ENCODE measurements at regions of chr19 and their contacts with region 1.

Region 1: GRCh38 chr19:16899566-16900075 is 10.8 kb downstream of the F2RL3 start:
- DNase-seq: peak; percentile 45 to 48
- H3K4me3 ChIP-seq: no peak overlapping the region
- H3K27ac ChIP-seq: no peak overlapping the region
- H3K4me1 ChIP-seq: peaks cover 3% of the 10 kb centered on the region; the same call in 1 of the 2 replicates
- H3K27me3 ChIP-seq: no peaks in the 10 kb centered on the region
- CTCF ChIP-seq: peak; percentile 82

Region 2: DNA sequence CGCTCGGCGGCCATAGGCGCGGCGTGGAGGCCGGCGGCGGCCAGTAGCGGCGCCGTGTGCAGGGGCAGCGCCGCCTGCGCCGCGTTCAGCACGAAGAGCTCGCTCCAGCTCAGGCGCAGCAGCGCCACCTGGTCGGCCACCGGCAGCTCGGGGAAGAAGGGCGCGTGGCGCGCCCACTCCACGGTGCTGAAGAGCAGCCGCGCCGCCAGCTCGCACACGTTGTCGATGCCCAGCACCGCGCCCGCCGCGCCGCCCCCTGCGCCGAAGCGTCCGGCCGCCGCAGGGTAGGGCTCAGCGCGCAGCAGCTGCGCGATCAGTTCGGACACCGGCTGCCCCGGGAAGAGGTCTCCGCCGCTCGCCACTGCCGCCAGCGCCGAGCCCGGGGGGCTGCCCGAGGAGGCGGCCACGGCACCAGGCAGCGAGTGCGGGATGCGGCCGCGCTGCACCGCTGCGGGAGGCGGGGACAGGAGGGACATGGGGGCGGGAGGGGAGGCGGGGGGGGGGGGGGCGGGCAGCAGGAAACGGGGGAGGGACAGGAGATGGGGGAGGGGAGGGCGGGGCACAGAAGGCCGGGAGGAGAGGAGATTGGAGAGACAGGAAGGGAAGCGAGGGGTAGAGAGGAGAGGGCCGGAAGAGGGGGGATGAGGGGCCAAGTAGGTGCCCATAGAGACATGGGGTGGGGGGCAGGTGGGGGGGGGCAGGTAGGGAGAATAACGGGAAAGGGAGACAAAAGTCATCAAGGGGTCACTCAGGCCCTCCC is 336.2 kb after region 1 on chr19:
- CTCF ChIA-PET with region 1: no interaction called
- POLR2A ChIA-PET with region 1: interaction called, 22 read pairs
- intact Hi-C with region 1: no loop called
- DNase-seq: peak in 1 of 2 experiments; percentile 24
- H3K4me3 ChIP-seq: peak overlapping the region; percentile 40; the same call in 1 of the 2 replicates
- H3K27ac ChIP-seq: no peak overlapping the region
- H3K4me1 ChIP-seq: peaks cover 11% of the 10 kb centered on the region; the same call in 1 of the 2 replicates
- H3K27me3 ChIP-seq: no peaks in the 10 kb centered on the region
- CTCF ChIP-seq: no peak

Measured in PC-9 (cell line).